Calu3 (cell line): ENCODE measurements at regions of chr2 and their contacts with region 1.

Region 1: DNA sequence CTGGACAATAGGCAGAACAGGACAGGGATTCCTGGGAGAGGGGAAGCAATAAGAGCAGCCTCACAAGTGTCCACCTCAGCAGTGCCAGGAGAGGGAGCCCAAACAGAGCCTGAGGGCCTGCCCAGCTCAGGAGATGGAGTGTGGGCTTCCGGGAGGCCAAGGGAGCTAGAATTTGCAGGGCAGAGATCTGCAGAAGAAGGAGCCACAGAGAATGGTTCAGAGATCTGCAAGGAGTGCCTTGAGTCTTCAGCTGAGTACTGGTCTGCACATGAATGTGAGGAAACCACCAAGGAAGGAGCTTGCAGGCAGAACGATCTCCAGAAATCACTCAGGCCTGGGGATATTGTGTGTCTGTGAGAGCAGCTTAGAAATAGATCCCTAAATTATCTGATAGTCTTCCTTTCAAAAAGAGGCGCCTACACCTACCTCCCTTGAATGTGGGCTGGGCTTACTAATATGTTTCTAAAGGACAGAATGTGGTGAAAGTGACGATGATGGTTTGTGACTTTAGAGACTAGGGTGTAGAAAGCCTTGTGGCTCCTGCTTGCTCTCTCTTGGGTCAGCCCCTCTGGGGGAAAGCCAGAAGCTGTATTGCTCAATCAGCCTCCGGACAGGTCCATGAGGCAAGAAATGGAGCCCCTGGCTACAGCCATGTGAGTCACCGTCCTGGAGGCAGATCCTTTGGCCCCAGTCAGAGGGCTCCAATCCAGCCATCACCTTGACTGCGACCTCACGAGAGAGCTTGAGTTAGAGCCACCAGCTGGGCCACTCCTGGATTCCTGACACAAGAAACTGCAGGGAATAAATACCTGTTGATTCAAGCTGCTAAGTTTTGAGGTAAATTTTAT is 7.6 kb upstream of the LPIN1 start:
- DNase-seq: peak; percentile 78
- H3K4me3 Mint-ChIP-seq: peak overlapping the region; percentile 43
- H3K27ac Mint-ChIP-seq: peak overlapping the region; percentile 73
- H3K4me1 Mint-ChIP-seq: peaks cover 33% of the 10 kb centered on the region
- H3K27me3 Mint-ChIP-seq: no peaks in the 10 kb centered on the region
- CTCF ChIP-seq: peak; percentile 60

Region 2: DNA sequence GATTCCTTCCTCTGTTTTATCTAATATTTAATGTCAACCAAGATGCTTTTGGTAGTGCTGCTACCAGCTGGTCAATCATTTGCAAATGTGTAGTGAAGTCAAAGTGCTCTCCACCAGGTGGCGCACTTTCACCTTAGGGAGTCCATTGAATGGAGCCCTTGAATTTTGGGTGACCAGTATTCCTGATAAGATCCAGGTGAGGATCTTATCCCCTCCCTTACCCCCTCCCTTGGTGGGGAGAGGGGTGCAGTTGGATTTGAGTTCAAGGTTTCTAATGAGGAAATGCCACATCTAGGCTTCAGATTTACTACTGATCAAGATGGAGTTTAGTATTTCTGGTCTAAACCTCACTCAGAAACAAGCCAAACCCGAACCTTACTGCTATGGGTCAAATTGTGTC is 260.8 kb before region 1 on chr2:
- CTCF ChIA-PET with region 1: no interaction called
- intact Hi-C with region 1: no loop called
- DNase-seq: peak; percentile 88
- H3K4me3 Mint-ChIP-seq: no peak overlapping the region
- H3K27ac Mint-ChIP-seq: no peak overlapping the region
- H3K4me1 Mint-ChIP-seq: peaks cover 3% of the 10 kb centered on the region
- H3K27me3 Mint-ChIP-seq: peaks cover 34% of the 10 kb centered on the region
- CTCF ChIP-seq: peak; percentile 64

Region 3: DNA sequence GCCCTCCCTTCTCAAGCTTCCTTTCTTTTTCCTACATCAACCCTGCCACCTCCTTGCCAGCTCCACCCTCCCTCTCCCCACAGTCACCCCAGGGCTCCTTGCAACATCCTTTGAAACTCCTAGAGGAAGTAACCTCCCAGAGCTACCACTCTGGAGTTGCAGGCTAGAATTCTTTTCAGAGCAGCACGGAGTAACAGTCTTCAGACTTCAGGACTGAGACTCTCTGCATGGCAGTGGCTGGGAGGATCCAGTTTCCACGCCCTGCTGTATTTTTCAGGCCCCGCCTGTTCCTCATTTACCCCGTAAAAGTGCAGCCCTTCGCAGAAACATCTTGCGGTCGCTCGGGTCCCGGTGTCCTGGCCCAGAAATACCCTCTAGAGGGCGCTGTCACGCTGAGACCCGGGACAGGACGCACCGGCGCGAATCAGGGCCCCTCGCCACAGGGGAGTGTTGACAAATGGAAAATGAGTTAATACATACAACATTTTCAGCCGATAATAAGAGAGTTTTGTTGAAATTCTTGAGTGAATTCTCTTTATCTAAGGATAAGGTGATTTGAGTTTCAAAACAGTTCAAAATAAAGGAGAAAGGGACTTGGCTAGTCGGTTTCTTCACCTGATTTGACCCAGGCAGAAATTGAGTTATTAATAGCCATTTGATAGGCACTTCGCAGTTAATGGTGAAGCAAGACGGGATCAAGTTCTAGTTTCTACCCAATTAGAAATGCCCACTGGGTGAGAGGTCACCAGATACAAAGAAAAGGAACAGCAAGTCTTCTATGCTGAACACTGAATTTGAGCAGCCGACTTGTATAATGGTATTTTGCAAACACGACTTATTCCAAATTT is 50.4 kb before region 1 on chr2:
- CTCF ChIA-PET with region 1: interaction called, 8 read pairs
- intact Hi-C with region 1: loop called (anchors 2 kb)
- DNase-seq: peak; percentile 81
- H3K4me3 Mint-ChIP-seq: peak overlapping the region; percentile 41
- H3K27ac Mint-ChIP-seq: no peak overlapping the region
- H3K4me1 Mint-ChIP-seq: peaks cover 11% of the 10 kb centered on the region
- H3K27me3 Mint-ChIP-seq: peaks cover 45% of the 10 kb centered on the region
- CTCF ChIP-seq: peak; percentile 86

Region 4: DNA sequence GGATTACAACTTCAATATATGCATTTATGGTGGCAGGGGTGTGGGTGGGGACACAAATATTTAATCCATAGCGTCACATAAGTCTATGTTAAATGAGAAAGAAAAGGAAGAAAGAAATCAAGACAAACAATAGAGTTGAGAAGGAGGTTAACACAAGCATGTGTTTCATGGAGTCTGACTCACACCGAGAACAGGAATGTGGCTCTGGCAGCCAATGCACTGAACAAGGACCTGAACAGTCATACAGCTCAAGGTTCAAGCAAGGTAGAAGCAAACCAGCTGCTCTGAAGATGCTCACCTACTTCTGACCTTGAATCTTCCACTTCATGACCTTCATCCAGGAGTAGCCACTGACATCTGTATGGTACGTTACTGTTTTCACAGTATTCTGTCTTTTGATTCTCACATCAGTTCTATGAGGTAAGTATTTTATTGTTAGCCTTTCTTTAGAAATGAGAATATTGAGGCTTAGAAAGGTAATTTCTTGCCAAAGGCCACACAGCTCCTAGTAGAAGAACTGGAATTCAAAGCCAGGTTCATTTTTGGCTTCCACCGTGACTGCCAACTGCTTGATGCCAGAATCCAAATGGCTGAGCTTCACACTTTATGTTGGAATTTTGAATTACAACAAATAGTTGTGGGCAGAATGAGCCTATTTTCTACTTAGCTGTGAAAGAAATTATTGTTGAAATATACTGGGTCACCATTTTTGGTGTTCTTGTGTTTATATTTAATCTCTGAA is 28.4 kb before region 1 on chr2:
- CTCF ChIA-PET with region 1: interaction called, 11 read pairs
- intact Hi-C with region 1: loop called (anchors 2 kb)
- DNase-seq: peak; percentile 58
- H3K4me3 Mint-ChIP-seq: no peak overlapping the region
- H3K27ac Mint-ChIP-seq: peak overlapping the region; percentile 15
- H3K4me1 Mint-ChIP-seq: peaks cover 45% of the 10 kb centered on the region
- H3K27me3 Mint-ChIP-seq: no peaks in the 10 kb centered on the region
- CTCF ChIP-seq: no peak

Region 5: DNA sequence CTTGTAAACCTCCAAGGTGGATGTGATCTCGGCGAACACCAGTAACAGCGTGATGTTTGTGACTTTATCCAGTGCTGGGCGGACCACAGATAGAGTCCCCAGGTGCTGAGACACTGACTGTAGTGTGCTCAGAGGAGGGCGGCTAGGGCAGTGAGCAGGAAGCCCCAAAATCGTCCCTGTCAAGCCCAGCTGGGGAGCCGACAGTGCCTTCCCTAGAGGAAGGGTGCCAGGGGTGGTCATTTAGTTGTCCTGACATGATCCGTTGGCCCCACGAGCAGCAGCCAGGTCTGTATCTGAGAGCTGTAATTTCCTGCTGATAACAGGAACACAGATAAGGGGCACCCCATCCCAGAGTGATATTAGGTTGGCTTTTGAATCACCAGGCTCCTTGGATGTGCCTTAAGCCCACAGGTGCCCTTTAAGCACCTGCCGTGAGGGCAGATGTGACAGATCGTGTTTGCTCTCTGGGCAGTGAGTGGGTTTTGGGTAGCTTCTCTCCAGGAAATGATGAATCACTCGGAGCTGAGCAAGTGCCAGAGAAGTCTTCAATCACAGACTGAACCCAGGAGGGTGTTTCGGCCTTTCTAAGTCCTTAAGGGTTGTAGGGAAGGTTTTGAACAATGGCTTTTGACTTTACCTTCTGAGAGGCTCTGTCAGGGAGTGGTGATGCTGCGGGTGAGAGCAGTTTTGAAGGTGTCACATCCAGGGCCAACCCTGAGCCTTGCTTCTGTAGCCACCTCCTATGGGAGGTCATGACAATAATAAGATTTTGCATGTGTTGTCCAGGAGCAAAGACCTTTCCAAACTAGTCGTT is 15.3 kb after region 1 on chr2:
- CTCF ChIA-PET with region 1: interaction called, 14 read pairs
- intact Hi-C with region 1: no loop called
- DNase-seq: peak; percentile 47
- H3K4me3 Mint-ChIP-seq: peak overlapping the region; percentile 49
- H3K27ac Mint-ChIP-seq: peak overlapping the region; percentile 89
- H3K4me1 Mint-ChIP-seq: peaks cover 54% of the 10 kb centered on the region
- H3K27me3 Mint-ChIP-seq: no peaks in the 10 kb centered on the region
- CTCF ChIP-seq: no peak

Region 6: DNA sequence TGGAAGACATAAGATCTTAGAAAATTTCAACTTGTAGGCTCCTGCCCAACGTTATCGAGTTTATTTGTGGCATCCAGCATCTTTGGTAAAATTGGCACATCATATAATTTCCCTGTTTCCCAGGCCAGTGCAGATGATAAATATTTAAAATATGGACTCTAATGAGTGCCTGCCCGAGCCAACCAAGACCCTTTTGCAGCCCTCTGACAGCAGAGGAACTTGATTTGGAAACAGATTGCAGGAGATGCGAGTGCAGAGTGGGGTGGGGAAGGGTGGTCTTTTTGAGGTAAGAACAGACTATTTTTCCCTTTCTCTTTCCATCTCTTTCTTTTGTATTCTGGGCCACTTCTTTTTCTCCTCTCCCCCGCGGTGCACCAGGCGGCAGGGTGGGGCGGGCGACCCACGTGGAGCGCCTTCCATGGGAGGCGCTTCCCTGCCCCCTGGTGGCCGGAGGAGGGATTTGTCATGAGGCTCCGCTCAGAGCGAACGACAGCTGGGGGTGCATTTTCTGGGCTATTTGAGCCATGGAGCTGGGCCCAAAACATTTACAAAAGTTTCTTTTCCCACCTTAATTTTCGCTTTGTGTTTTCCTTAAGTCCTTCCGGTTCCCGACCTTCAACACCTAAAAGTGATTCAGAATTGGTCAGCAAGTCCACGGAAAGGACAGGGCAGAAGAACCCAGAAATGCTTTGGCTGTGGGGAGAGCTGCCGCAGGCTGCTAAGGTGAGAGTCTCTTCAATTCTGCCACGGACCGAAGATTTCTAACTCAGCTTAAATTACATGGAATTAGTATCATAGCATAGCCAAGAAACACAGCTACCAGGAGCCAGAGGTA is 40.3 kb after region 1 on chr2:
- CTCF ChIA-PET with region 1: interaction called, 16 read pairs
- intact Hi-C with region 1: loop called (anchors 1 kb)
- DNase-seq: peak; percentile 88
- H3K4me3 Mint-ChIP-seq: no peak overlapping the region
- H3K27ac Mint-ChIP-seq: no peak overlapping the region
- H3K4me1 Mint-ChIP-seq: peaks cover 21% of the 10 kb centered on the region
- H3K27me3 Mint-ChIP-seq: no peaks in the 10 kb centered on the region
- CTCF ChIP-seq: peak; percentile 95